ENCODE measurements at regions of chr4 and their contacts with region 1.

Region 1: GRCh38 chr4:79576429-79576753 is 168.4 kb upstream of the GK2 start:
- DNase-seq: no peak
- ATAC-seq: peak in 1 of 2 donors; percentile 28
- H3K4me3 ChIP-seq: no peak overlapping the region
- H3K27ac ChIP-seq: peak overlapping the region in 2 of 4 donors; percentile 1 to 32
- H3K4me1 ChIP-seq: peaks cover 0 to 7% of the 10 kb centered on the region in 2 donors
- H3K27me3 ChIP-seq: no peaks in the 10 kb centered on the region
- CTCF ChIP-seq: peak in 1 of 5 experiments; percentile 33
- POLR2A ChIP-seq: no peak

Region 2: GRCh38 chr4:78951862-78952472 is 624.4 kb before region 1 on chr4:
- in situ Hi-C with region 1: loop called in 2 of 4 experiments (anchors 10 kb)
- intact Hi-C with region 1: loop called (anchors 5 kb)
- DNase-seq: peak in 1 of 2 donors; percentile 13
- ATAC-seq: peak; percentile 78
- H3K4me3 ChIP-seq: no peak overlapping the region
- H3K27ac ChIP-seq: no peak overlapping the region
- H3K4me1 ChIP-seq: no peaks in the 10 kb centered on the region
- H3K27me3 ChIP-seq: no peaks in the 10 kb centered on the region
- CTCF ChIP-seq: peak; percentile 54 to 69 (median 66)
- POLR2A ChIP-seq: no peak

Region 3: GRCh38 chr4:79042079-79042674 is 534.2 kb before region 1 on chr4:
- in situ Hi-C with region 1: no loop called
- intact Hi-C with region 1: loop called (anchors 1 kb)
- DNase-seq: no peak
- ATAC-seq: peak; percentile 72 to 81
- H3K4me3 ChIP-seq: no peak overlapping the region
- H3K27ac ChIP-seq: no peak overlapping the region
- H3K4me1 ChIP-seq: peaks cover 0 to 5% of the 10 kb centered on the region in 2 donors
- H3K27me3 ChIP-seq: no peaks in the 10 kb centered on the region
- CTCF ChIP-seq: peak; percentile 27 to 54 (median 52)
- POLR2A ChIP-seq: no peak

Region 4: DNA sequence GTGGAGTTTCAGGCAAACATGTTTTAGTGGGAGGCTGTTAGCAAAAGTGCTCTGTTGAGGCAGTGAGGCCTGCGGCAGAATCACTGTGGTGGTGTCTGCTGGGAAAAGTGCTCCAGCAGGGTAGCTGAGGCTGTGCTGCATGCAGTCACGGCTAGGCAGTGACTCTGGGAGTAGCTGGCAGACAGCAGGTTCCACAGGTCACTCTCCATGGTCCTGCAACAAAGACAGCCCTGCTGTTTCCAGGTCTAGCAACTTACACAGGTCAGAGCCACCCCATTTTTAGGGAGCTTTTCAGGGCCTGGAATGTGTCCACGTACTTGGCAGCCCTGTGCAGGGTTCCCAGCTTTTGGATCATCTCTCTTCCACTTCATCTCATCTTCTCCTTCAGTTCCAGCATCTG is 434.9 kb before region 1 on chr4:
- in situ Hi-C with region 1: no loop called
- intact Hi-C with region 1: no loop called
- DNase-seq: no peak
- ATAC-seq: no peak
- H3K4me3 ChIP-seq: no peak overlapping the region
- H3K27ac ChIP-seq: no peak overlapping the region
- H3K4me1 ChIP-seq: no peaks in the 10 kb centered on the region
- H3K27me3 ChIP-seq: no peaks in the 10 kb centered on the region
- CTCF ChIP-seq: no peak
- POLR2A ChIP-seq: no peak

Region 5: GRCh38 chr4:79552311-79552710 is 24.1 kb before region 1 on chr4:
- in situ Hi-C with region 1: no loop called
- intact Hi-C with region 1: no loop called
- DNase-seq: no peak
- ATAC-seq: no peak
- H3K4me3 ChIP-seq: no peak overlapping the region
- H3K27ac ChIP-seq: no peak overlapping the region
- H3K4me1 ChIP-seq: no peaks in the 10 kb centered on the region
- H3K27me3 ChIP-seq: no peaks in the 10 kb centered on the region
- CTCF ChIP-seq: no peak
- POLR2A ChIP-seq: no peak

Measured in gastrocnemius medialis (tissue), 4 donors.